ENCODE measurements at regions of chr15 and their contacts with region 1.

Region 1: GRCh38 chr15:66504563-66505429 is at the starts of genes RPL4 and ZWILCH:
- DNase-seq: peak; percentile 84
- H3K4me3 ChIP-seq: peak within 1 kb of the TSS; percentile 76 to 99 (median 95)
- H3K27ac ChIP-seq: peak within 1 kb of the TSS; percentile 94
- H3K4me1 ChIP-seq: peaks cover 13% of the 10 kb centered on the region
- H3K27me3 ChIP-seq: no peaks in the 10 kb centered on the region
- CTCF ChIP-seq: no peak
- total RNA-seq, gene RPL4: 2,956 to 3,547 TPM
- total RNA-seq, gene ZWILCH: 8.5 to 26.9 TPM

Region 2: DNA sequence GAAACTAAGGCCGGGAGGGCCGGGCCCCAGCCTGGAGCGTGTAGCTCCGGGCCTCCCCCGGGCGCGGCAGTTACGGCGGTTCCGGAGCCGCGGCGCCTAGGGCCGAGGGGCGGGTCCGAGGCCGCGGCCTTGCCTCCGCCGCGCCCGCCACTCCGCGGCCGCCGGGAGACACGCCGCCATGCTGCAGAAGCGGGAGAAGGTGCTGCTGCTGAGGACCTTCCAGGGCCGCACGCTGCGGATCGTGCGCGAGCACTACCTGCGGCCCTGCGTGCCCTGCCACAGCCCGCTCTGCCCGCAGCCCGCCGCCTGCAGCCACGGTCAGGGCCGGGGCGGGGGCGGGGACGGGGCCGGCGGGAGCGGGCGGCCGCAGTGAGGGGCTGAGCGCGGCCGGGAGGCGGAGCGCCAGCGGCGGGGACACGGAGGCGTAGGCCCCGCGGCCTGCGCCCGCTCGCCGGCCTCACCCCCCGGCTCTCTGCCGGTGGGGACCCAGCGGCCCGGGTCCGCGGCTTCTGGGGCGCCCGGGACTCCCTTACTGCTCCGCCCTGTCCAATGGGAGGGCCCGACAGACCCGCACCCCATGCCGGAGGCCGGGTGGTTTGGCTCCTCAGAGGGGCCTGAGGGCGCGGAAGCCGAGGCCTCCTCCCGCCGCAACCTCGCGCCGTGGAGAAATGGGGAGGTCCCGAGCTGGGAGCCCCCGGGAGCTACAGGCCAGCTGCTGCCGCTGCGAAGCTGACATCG is 211.2 kb before region 1 on chr15 and contains the start of gene DIS3L:
- CTCF ChIA-PET with region 1: no interaction called
- dilution Hi-C with region 1: no loop called
- in situ Hi-C with region 1: no loop called
- intact Hi-C with region 1: loop called (anchors 2 kb)
- DNase-seq: peak; percentile 55
- H3K4me3 ChIP-seq: peak within 1 kb of the TSS; percentile 55 to 86 (median 63)
- H3K27ac ChIP-seq: peak within 1 kb of the TSS; percentile 57
- H3K4me1 ChIP-seq: peaks cover 30% of the 10 kb centered on the region
- H3K27me3 ChIP-seq: no peaks in the 10 kb centered on the region
- CTCF ChIP-seq: no peak
- total RNA-seq, gene DIS3L: 17.7 to 22.1 TPM

Region 3: DNA sequence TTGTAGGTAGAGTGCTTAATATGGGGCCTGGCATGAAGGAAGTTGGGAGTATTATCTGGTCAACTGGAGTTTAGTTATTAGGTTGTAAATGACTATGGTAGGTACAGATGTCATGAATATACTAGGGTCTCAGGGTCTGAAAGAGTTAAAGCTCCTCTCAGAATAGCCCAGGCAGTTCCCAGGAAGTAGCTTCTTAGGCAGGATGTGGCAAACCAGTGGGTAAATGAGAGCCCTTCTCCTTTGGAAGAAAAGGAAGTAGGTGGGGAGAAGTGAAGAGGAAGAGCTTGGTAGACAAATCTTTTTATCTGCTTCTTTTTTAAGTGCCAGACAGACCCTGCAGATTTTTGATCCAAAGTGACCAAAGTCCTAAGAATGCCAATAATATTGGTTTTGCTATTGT is 93.6 kb before region 1 on chr15:
- CTCF ChIA-PET with region 1: no interaction called
- dilution Hi-C with region 1: loop called (anchors 5 kb)
- in situ Hi-C with region 1: no loop called
- intact Hi-C with region 1: no loop called
- DNase-seq: no peak
- H3K4me3 ChIP-seq: no peak overlapping the region
- H3K27ac ChIP-seq: no peak overlapping the region
- H3K4me1 ChIP-seq: peaks cover 11% of the 10 kb centered on the region
- H3K27me3 ChIP-seq: no peaks in the 10 kb centered on the region
- CTCF ChIP-seq: no peak

Region 4: GRCh38 chr15:66566963-66567531 is 62.3 kb after region 1 on chr15:
- CTCF ChIA-PET with region 1: no interaction called
- dilution Hi-C with region 1: no loop called
- in situ Hi-C with region 1: no loop called
- intact Hi-C with region 1: loop called (anchors 1 kb)
- DNase-seq: peak; percentile 45
- H3K4me3 ChIP-seq: no peak overlapping the region
- H3K27ac ChIP-seq: no peak overlapping the region
- H3K4me1 ChIP-seq: peaks cover 19% of the 10 kb centered on the region
- H3K27me3 ChIP-seq: no peaks in the 10 kb centered on the region
- CTCF ChIP-seq: peak; percentile 60 to 68

Measured in mammary epithelial cell (primary cell).